HCT116 (cell line): ENCODE measurements at regions of chr13 and their contacts with region 1.

Region 1: DNA sequence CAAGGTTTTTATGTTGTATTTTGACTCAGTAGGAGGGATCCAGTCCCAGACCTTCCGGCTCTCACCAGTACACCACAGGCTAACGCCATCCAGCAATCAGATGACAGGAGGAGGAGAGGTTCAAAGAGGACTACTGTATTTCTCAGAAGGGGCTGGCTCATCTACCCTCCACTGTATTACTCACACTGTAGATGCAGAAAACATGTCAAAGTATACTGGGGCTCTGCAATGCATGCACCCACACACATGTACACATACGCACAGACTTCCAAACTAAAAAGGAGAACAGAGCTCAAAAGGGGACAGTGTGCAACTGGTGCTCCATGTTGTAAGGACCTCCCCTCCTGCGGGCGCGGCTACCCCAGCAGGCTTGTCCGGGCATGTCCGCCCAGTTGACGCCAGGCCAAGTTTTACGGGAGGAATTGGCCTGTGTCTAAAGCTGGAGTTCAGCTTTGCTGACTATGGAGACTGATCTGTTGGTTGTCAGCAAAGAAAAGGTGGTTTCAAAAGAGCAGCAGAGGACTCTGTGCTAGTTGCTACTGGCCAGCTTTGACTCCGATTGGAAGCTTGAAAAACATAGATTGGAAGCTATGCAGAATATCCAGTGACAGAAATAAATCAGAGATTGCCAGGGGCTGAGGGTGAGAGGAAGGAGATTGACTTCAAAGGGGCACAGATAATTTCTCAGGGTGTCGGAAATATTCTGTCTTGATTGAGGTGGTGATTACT is 314.2 kb downstream of the DLEU7 start:
- DNase-seq: peak; percentile 65
- ATAC-seq: peak; percentile 94
- H3K4me3 ChIP-seq: peak overlapping the region; percentile 7 to 41; a peak in 3 of 4 replicates
- H3K27ac ChIP-seq: peak overlapping the region; percentile 92
- H3K4me1 ChIP-seq: peaks cover 29 to 32% of the 10 kb centered on the region in 2 experiments
- H3K27me3 ChIP-seq: no peaks in the 10 kb centered on the region
- CTCF ChIP-seq: no peak
- POLR2A ChIP-seq: no peak
- RAD21 ChIP-seq: no peak

Region 2: DNA sequence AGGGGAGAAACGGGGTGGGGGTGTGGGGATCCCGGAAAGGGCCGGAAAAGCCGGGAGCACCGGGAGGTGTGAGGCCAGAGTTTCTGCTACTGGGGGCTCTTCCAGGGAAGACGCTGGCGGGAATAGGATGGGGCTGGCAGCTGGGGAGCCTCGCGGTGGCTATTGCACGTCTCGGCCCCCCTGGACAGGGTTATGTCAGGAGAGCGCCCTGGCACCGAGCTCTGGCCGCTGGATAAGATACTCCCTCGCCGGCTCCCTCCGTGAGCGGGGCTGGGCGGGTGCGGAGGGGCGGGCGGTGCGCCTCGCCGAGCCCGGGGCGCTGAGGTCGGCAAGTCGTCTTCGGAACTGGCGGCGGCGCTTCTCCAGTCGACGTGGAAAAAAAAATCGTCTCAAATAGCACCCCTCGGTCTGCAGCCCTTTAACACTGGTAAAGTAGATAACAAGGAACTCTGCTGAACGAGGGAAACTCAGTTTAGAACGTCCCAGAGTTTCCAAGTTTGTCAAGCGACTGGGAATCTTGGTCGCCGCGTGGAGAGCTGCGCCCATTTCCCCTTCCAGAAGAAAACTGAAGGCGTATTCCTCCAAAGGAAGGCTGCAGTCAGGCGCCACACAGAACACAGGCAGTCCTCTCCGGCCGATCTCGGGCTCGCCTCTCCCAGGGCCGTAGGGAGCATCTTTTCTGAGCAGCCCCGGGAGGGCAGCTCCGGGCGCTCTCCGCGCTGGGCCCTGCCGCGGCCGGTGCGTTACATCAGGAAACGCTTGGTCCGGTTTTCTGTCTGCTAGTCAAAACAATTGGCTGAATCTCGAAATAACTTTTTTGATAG is 399.0 kb before region 1 on chr13:
- CTCF ChIA-PET with region 1: no interaction called
- POLR2A ChIA-PET with region 1: no interaction called
- RAD21 ChIA-PET with region 1: no interaction called
- intact Hi-C with region 1: loop called (anchors 5 kb)
- DNase-seq: no peak
- ATAC-seq: peak; percentile 44
- H3K4me3 ChIP-seq: peak overlapping the region; percentile 44 to 56
- H3K27ac ChIP-seq: no peak overlapping the region
- H3K4me1 ChIP-seq: peaks cover 4 to 26% of the 10 kb centered on the region in 2 experiments; a peak in 3 of 4 replicates
- H3K27me3 ChIP-seq: 0 out of 2 replicates have a peak, but pooled peaks cover 3% of the 10 kb centered on the region
- CTCF ChIP-seq: no peak
- POLR2A ChIP-seq: no peak
- RAD21 ChIP-seq: no peak

Region 3: GRCh38 chr13:50911937-50912795 is 382.8 kb after region 1 on chr13:
- CTCF ChIA-PET with region 1: no interaction called
- POLR2A ChIA-PET with region 1: no interaction called
- RAD21 ChIA-PET with region 1: no interaction called
- intact Hi-C with region 1: loop called (anchors 5 kb)
- DNase-seq: peak; percentile 80
- ATAC-seq: peak; percentile 18; the same call in 1 of the 2 replicates
- H3K4me3 ChIP-seq: no peak overlapping the region
- H3K27ac ChIP-seq: no peak overlapping the region
- H3K4me1 ChIP-seq: peaks cover 12 to 25% of the 10 kb centered on the region in 2 experiments; a peak in 3 of 4 replicates
- H3K27me3 ChIP-seq: no peaks in the 10 kb centered on the region
- CTCF ChIP-seq: peak; percentile 63 to 88 (median 87); a peak in 5 of 6 replicates
- POLR2A ChIP-seq: no peak
- RAD21 ChIP-seq: peak; percentile 81